Psoas muscle (tissue), 8 donors: ENCODE measurements at regions of chr12 and their contacts with region 1.

Region 1: GRCh38 chr12:6752921-6753771 is at the start of gene MLF2:
- DNase-seq: peak; percentile 98 to 99
- ATAC-seq: peak; percentile 95 to 97 (median 96)
- H3K4me3 ChIP-seq: peak within 1 kb of the TSS; percentile 99
- H3K27ac ChIP-seq: peak within 1 kb of the TSS; percentile 99
- H3K4me1 ChIP-seq: peaks cover 12% of the 10 kb centered on the region
- H3K27me3 ChIP-seq: no peaks in the 10 kb centered on the region
- CTCF ChIP-seq: peak; percentile 91
- total RNA-seq, gene MLF2: 104 to 188 (median 132) TPM

Region 2: DNA sequence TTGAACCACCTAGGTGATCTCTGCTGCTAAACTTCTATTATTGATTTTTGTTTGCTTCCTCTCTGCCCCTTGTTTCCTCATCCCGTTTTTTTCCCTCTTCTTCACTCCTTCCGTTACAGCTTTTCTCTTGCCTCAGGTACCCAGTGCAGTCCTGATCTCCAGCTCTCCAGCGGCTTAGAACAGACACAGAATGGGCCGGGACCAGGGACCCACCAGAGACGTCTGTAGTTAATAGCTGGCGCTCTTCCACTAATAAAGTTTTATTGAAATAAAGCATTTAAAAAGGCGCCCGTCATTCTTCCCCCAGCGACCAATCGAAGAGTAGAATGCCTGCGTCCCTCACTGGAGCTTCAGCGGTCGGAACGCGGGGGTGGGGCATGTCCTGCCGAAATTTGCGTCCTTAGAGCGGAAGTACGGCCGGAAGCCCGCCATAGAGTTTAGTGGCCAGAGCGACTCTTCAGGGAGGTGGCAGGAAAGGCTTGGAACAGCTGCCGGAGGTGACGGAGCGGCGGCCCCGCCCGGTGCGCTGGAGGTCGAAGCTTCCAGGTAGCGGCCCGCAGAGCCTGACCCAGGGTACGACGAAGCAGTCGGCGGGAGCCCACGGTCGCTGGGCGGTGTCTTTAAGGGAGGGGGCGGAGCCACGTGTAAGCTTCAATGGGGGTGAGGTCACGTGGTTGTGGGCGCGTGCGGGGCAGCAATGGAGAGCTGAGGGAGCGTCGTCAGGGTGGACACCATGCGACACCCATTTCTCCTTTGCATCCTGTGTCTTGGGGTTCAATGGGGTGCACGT is 29.3 kb before region 1 on chr12 and contains the start of gene COPS7A:
- intact Hi-C with region 1: loop called in 1 of 2 experiments (anchors 1 kb)
- DNase-seq: peak; percentile 99
- ATAC-seq: peak; percentile 97 to 99 (median 98)
- H3K4me3 ChIP-seq: peak within 1 kb of the TSS; percentile 68
- H3K27ac ChIP-seq: peak within 1 kb of the TSS; percentile 90
- H3K4me1 ChIP-seq: peaks cover 11% of the 10 kb centered on the region
- H3K27me3 ChIP-seq: peaks cover 0 to 5% (median 0%) of the 10 kb centered on the region in 3 donors
- CTCF ChIP-seq: no peak
- total RNA-seq, gene COPS7A: 72.3 to 86.2 (median 77.1) TPM

Region 3: GRCh38 chr12:6766651-6767349 is 13.7 kb after region 1 on chr12:
- intact Hi-C with region 1: loop called in 1 of 2 experiments (anchors 1 kb)
- DNase-seq: peak; percentile 84 to 89
- ATAC-seq: peak; percentile 69 to 87 (median 84)
- H3K4me3 ChIP-seq: peak overlapping the region; percentile 84
- H3K27ac ChIP-seq: peak overlapping the region; percentile 80
- H3K4me1 ChIP-seq: peaks cover 26% of the 10 kb centered on the region
- H3K27me3 ChIP-seq: peaks cover 0 to 9% (median 0%) of the 10 kb centered on the region in 3 donors
- CTCF ChIP-seq: peak; percentile 73

Region 4: GRCh38 chr12:6778574-6779550 is 25.7 kb after region 1 on chr12:
- intact Hi-C with region 1: loop called (anchors 1 to 2 kb)
- DNase-seq: peak; percentile 94 to 97
- ATAC-seq: peak; percentile 98 to 99 (median 99)
- H3K4me3 ChIP-seq: peak overlapping the region; percentile 65
- H3K27ac ChIP-seq: peak overlapping the region; percentile 68
- H3K4me1 ChIP-seq: peaks cover 5% of the 10 kb centered on the region
- H3K27me3 ChIP-seq: peaks cover 0 to under 1% (median 0%) of the 10 kb centered on the region in 3 donors
- CTCF ChIP-seq: peak; percentile 96

Region 5: DNA sequence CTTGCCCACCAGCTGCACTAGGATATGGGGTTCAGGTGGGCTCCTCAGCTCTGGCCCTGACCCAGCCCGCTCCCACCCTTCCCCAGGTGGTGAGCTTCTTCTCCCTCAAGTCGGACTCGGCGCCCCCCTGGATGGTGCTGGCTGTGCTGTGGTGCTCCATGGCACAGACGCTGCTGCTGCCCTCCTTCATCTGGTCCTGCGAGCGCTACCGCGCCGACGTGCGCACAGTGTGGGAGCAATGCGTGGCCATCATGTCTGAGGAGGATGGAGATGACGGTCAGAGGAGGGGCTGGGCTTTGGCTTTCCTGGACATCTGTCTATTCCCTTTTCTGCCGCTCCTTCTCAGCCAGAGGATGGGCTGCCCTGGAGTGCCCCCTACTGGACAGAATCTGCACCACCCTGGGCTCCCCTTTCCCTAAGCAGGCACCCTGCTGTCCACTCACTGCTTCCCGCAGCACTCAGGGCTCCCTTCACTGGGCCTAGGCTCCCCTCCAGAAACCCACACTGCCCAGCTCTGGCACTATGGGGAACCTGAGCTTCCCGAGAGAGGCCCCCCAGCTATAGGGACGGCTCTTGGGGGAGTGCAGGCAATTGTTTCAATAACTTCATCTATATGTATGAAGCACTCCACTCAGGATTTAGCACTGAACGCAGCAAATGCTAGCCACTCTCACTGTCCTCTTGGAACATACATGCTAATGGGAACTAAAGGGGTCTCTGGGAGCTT is 72.4 kb after region 1 on chr12:
- intact Hi-C with region 1: loop called (anchors 5 to 10 kb)
- DNase-seq: peak; percentile 83 to 89
- ATAC-seq: peak; percentile 79 to 83 (median 82)
- H3K4me3 ChIP-seq: no peak overlapping the region
- H3K27ac ChIP-seq: no peak overlapping the region
- H3K4me1 ChIP-seq: peaks cover 3% of the 10 kb centered on the region
- H3K27me3 ChIP-seq: peaks cover 0 to 70% (median 15%) of the 10 kb centered on the region in 3 donors
- CTCF ChIP-seq: peak; percentile 87